MCF 10A (cell line): ENCODE measurements at regions of chr11 and their contacts with region 1.

Region 1: GRCh38 chr11:129279326-129280026 is 87.4 kb upstream of the ARHGAP32 start:
- DNase-seq: peak; percentile 76
- H3K4me3 Mint-ChIP-seq: peak overlapping the region; percentile 80
- H3K27ac Mint-ChIP-seq: no peak overlapping the region
- H3K4me1 Mint-ChIP-seq: peaks cover 38% of the 10 kb centered on the region
- H3K27me3 Mint-ChIP-seq: no peaks in the 10 kb centered on the region
- CTCF ChIP-seq: peak; percentile 9

Region 2: GRCh38 chr11:129117595-129118350 is 161.7 kb before region 1 on chr11:
- CTCF ChIA-PET with region 1: interaction called, 14 read pairs
- POLR2A ChIA-PET with region 1: interaction called, 4 read pairs
- intact Hi-C with region 1: loop called (anchors 1 kb)
- DNase-seq: peak; percentile 79
- H3K4me3 Mint-ChIP-seq: no peak overlapping the region
- H3K27ac Mint-ChIP-seq: no peak overlapping the region
- H3K4me1 Mint-ChIP-seq: peaks cover 33% of the 10 kb centered on the region
- H3K27me3 Mint-ChIP-seq: no peaks in the 10 kb centered on the region
- CTCF ChIP-seq: peak; percentile 84

Region 3: GRCh38 chr11:129143335-129143734 is 136.1 kb before region 1 on chr11:
- CTCF ChIA-PET with region 1: no interaction called
- POLR2A ChIA-PET with region 1: interaction called, 13 read pairs
- intact Hi-C with region 1: loop called (anchors 5 kb)
- DNase-seq: peak; percentile 100
- H3K4me3 Mint-ChIP-seq: peak overlapping the region; percentile 70
- H3K27ac Mint-ChIP-seq: peak overlapping the region; percentile 94
- H3K4me1 Mint-ChIP-seq: peaks cover 32% of the 10 kb centered on the region
- H3K27me3 Mint-ChIP-seq: no peaks in the 10 kb centered on the region
- CTCF ChIP-seq: no peak

Region 4: GRCh38 chr11:129192156-129192555 is 87.3 kb before region 1 on chr11 and contains the start of gene ARHGAP32:
- CTCF ChIA-PET with region 1: interaction called, 3 read pairs
- POLR2A ChIA-PET with region 1: interaction called, 7 read pairs
- intact Hi-C with region 1: loop called (anchors 5 kb)
- DNase-seq: peak; percentile 51
- H3K4me3 Mint-ChIP-seq: no peak within 1 kb of the TSS
- H3K27ac Mint-ChIP-seq: no peak within 1 kb of the TSS
- H3K4me1 Mint-ChIP-seq: peaks cover 12% of the 10 kb centered on the region
- H3K27me3 Mint-ChIP-seq: no peaks in the 10 kb centered on the region
- CTCF ChIP-seq: no peak
- total RNA-seq, gene ARHGAP32: 62.6 and 71.3 TPM in 2 replicates

Region 5: DNA sequence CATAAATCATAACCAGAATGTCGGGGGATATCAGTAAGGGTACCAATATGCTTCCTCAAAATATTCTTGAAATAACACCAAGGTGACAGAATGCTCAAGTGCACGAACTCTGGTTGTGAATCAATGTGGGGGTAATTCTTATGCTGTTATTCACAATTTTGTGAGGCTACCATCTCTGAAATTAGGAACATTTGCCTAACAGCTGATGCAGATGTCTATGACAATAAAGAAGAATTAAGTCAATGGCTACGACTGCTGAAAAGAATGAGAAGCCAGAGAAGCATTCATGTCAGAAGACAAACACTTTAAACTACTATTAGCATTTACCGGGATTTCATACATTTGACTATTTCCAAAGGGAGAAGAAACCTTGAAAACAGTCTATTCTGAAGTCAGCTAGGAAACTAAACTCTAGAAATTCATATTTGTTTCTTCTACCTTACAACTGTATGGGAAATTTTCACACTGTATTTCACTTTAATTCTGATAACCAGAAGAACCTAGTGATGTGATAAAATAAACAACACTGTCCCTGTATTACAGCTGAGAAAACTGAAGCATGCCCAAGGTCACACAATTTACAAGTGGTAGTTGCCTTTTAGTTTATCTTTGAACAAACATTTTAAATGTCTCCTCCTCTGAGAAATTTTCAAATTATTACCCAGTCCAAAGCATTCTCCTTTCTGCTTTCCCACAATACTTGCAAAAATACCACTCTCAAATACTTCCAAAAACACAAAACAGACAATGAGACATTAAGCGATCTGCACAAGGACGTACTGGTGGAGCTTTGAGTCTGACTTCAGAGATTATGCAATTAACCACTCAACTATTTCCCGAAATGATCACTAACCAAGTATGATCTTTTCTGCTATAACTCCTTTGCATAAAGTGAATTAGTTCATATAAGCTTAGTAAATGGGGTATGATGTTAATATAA is 69.3 kb before region 1 on chr11:
- CTCF ChIA-PET with region 1: no interaction called
- POLR2A ChIA-PET with region 1: no interaction called
- intact Hi-C with region 1: no loop called
- DNase-seq: no peak
- H3K4me3 Mint-ChIP-seq: no peak overlapping the region
- H3K27ac Mint-ChIP-seq: peak overlapping the region; percentile 19
- H3K4me1 Mint-ChIP-seq: peaks cover 22% of the 10 kb centered on the region
- H3K27me3 Mint-ChIP-seq: no peaks in the 10 kb centered on the region
- CTCF ChIP-seq: no peak

Region 6: DNA sequence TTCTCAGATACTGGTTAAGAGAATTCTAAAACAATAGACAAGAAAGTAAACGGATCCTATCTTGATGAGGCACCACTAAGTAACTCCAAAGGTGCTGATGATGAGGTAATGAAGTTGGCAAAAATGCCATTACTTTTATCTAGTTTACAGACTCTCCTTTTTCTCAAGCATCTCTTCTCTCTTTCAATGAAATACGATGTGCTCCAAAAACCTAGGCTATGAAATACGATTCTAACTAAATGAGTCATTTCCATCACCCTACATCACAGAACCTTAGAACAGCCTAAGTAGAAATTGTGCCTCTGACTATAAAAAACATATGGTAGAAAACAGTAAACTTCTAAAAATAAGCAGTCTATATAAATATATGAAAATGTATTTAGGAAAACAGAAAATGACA is 28.4 kb before region 1 on chr11:
- CTCF ChIA-PET with region 1: interaction called, 3 read pairs
- POLR2A ChIA-PET with region 1: interaction called, 10 read pairs
- intact Hi-C with region 1: no loop called
- DNase-seq: peak; percentile 22
- H3K4me3 Mint-ChIP-seq: no peak overlapping the region
- H3K27ac Mint-ChIP-seq: peak overlapping the region; percentile 64
- H3K4me1 Mint-ChIP-seq: peaks cover 34% of the 10 kb centered on the region
- H3K27me3 Mint-ChIP-seq: no peaks in the 10 kb centered on the region
- CTCF ChIP-seq: no peak

Region 7: GRCh38 chr11:129372609-129373488 is 93.4 kb after region 1 on chr11:
- CTCF ChIA-PET with region 1: no interaction called
- POLR2A ChIA-PET with region 1: no interaction called
- intact Hi-C with region 1: no loop called
- DNase-seq: no peak
- H3K4me3 Mint-ChIP-seq: no peak overlapping the region
- H3K27ac Mint-ChIP-seq: no peak overlapping the region
- H3K4me1 Mint-ChIP-seq: peaks cover 6% of the 10 kb centered on the region
- H3K27me3 Mint-ChIP-seq: peaks cover 96% of the 10 kb centered on the region
- CTCF ChIP-seq: no peak